ENCODE measurements at regions of chr1 and their contacts with region 1.

Region 1: GRCh38 chr1:27122652-27123051 is 32.3 kb downstream of the SLC9A1 start:
- DNase-seq: no peak
- H3K4me3 ChIP-seq: no peak overlapping the region
- CTCF ChIP-seq: no peak

Region 2: GRCh38 chr1:27179979-27180378 is 57.3 kb after region 1 on chr1:
- in situ Hi-C with region 1: loop called (anchors 10 kb)
- DNase-seq: no peak
- H3K4me3 ChIP-seq: no peak overlapping the region
- CTCF ChIP-seq: no peak